GM12878 (cell line): ENCODE measurements at regions of chr7 and their contacts with region 1.

Region 1: DNA sequence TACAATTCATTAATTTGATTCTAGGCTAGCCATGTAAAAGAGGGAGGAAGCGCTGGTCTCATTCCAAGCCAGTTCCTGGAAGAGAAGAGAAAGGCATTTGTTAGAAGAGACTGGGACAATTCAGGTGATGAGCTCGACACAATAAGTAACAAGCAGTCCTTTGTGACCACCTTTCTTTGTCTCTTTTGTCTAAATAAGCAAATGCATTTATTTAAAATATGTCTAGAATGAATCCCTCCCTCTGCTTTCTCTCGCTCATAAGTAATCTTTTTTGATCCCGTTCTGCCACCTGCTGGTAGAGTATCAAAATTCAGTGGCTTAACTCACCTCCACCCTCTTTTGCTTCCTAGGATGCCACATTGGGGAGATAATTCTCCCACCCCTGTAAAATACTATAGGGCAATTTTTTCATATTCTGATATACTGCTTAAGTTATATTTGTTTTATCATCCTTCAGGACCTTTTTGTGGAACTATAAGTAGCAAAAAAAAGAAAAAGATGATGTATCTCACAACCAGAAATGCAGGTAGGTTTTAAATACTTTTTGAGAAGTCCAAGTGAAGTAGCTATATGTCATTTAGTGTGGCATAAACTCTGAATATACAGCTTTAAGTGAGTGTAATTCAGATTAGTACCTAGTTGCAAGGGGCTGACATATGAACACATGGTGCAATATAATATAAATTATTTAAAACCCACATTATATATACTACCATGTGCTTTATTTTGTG is 91.5 kb downstream of the GSDME start:
- DNase-seq: peak; percentile 27
- ATAC-seq: peak; percentile 92
- H3K4me3 ChIP-seq: no peak overlapping the region
- H3K27ac ChIP-seq: no peak overlapping the region
- H3K4me1 ChIP-seq: no peaks in the 10 kb centered on the region
- H3K27me3 ChIP-seq: no peaks in the 10 kb centered on the region
- CTCF ChIP-seq: peak; percentile 56 to 75 (median 56); a peak in 5 of 6 replicates
- EP300 ChIP-seq: no peak
- POLR2A ChIP-seq: no peak
- RAD21 ChIP-seq: peak; percentile 82

Region 2: DNA sequence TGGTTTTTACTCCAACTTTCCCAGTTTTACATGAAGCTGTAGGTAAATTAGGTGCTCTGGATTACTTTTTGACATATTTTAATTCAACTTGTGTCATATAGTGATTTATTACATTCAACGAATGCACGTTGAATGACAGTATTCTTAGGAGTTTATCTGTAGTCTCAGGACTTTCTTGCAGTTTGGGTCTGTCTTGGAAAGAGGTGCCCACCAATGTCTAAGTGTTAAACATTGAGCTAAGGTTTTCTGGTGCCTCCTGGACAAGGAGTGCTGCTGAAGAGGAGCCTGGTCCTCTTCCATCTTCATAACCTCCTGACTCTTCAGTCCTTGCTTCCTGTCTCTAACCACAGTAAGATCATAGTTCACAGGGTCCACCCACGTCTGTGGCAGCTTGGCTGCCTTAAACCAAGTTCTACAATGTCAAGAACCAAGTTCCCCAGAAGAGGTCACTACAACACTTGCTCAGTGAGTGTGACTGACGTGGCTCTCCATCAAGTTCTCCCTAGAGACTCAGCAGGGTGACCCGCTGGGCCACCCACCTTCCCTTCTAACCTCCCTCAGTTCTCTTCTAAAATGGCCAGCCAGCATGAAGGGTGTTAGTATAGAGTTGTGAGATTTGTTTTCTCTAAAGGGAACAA is 375.6 kb before region 1 on chr7:
- CTCF ChIA-PET with region 1: interaction called, 16 read pairs
- POLR2A ChIA-PET with region 1: no interaction called
- RAD21 ChIA-PET with region 1: interaction called, 11 read pairs
- SMC1A ChIA-PET with region 1: interaction called, 18 read pairs
- in situ Hi-C with region 1: loop called (anchors 5 kb)
- intact Hi-C with region 1: loop called (anchors 1 kb)
- DNase-seq: peak; percentile 70
- ATAC-seq: peak; percentile 99
- H3K4me3 ChIP-seq: no peak overlapping the region
- H3K27ac ChIP-seq: no peak overlapping the region
- H3K4me1 ChIP-seq: 0 out of 2 replicates have a peak, but pooled peaks cover 2% of the 10 kb centered on the region
- H3K27me3 ChIP-seq: peaks cover 7% of the 10 kb centered on the region in 2 experiments
- CTCF ChIP-seq: peak; percentile 63 to 76 (median 71)
- EP300 ChIP-seq: no peak
- POLR2A ChIP-seq: no peak
- RAD21 ChIP-seq: peak; percentile 90

Region 3: DNA sequence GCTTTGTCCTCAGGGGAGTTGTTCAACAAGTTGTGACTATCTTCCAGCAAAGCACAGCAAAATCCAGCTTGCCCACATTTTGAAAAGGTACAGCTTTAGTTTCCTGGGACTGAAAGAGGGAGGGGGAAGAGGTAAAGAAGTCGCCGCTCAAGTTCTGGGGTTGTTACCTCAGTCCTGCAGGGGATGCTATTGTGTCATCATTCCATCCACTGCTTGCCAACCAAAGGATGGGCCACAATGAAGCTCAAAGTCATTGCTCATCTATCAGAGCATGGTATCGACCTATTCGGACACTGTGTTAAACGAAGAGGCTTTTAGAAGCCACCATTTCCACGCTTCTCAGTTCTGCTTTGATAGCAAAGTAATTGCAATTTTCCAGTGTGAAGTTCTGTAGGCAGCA is 347.4 kb before region 1 on chr7:
- CTCF ChIA-PET with region 1: interaction called, 17 read pairs
- POLR2A ChIA-PET with region 1: no interaction called
- RAD21 ChIA-PET with region 1: interaction called, 6 read pairs
- SMC1A ChIA-PET with region 1: interaction called, 5 read pairs
- in situ Hi-C with region 1: no loop called
- intact Hi-C with region 1: loop called (anchors 2 kb)
- DNase-seq: no peak
- ATAC-seq: peak; percentile 86
- H3K4me3 ChIP-seq: no peak overlapping the region
- H3K27ac ChIP-seq: no peak overlapping the region
- H3K4me1 ChIP-seq: no peaks in the 10 kb centered on the region
- H3K27me3 ChIP-seq: no peaks in the 10 kb centered on the region
- CTCF ChIP-seq: peak; percentile 56 to 69 (median 66)
- EP300 ChIP-seq: no peak
- POLR2A ChIP-seq: no peak
- RAD21 ChIP-seq: peak; percentile 87

Region 4: DNA sequence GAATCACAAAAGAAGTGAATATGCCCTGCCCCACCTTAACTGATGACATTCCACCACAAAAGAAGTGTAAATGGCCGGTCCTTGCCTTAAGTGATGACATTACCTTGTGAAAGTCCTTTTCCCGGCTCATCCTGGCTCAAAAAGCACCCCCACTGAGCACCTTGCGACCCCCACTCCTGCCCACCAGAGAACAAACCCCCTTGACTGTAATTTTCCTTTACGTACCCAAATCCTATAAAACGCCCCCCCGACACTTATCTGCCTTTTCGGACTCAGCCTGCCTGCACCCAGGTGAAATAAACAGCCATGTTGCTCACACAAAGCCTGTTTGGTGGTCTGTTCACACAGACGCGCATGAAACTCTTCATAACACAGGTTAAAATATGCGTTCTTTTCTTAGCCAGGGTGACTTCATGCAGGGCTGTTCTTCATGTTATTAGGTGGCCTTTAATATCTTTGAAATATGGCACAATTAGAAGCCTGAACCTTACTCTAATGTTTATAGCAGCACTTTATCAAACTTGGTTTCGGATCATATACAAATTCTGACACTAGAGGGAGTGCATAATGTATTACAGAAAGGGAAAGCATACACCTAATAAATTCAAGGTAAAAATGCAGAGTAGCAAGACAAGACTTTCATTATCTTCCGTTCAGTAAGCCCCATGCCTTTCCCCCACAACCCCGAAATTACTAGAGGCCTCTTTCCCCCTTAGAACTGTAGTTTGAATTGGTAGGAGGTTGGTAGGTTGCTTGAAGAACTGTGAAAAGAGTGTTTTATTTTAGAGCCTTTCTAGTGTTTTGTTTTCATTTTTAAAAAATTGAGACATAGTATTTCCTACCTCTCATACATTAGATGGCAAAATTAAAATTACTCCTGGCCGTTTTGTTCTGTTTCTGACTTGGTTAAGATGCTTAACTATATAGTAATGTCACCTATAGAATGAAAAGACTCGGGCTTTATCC is 263.8 kb before region 1 on chr7:
- CTCF ChIA-PET with region 1: interaction called, 6 read pairs
- POLR2A ChIA-PET with region 1: no interaction called
- RAD21 ChIA-PET with region 1: no interaction called
- SMC1A ChIA-PET with region 1: interaction called, 3 read pairs
- in situ Hi-C with region 1: loop called (anchors 5 kb)
- intact Hi-C with region 1: loop called (anchors 1 kb)
- DNase-seq: no peak
- ATAC-seq: peak; percentile 81
- H3K4me3 ChIP-seq: no peak overlapping the region
- H3K27ac ChIP-seq: no peak overlapping the region
- H3K4me1 ChIP-seq: peaks cover 9% of the 10 kb centered on the region
- H3K27me3 ChIP-seq: no peaks in the 10 kb centered on the region
- CTCF ChIP-seq: peak; percentile 38 to 52 (median 50); a peak in 5 of 6 replicates
- EP300 ChIP-seq: no peak
- POLR2A ChIP-seq: no peak
- RAD21 ChIP-seq: peak; percentile 72

Region 5: GRCh38 chr7:24580283-24580946 is 85.3 kb before region 1 on chr7:
- CTCF ChIA-PET with region 1: interaction called, 136 read pairs
- POLR2A ChIA-PET with region 1: no interaction called
- RAD21 ChIA-PET with region 1: interaction called, 106 read pairs
- SMC1A ChIA-PET with region 1: interaction called, 142 read pairs
- in situ Hi-C with region 1: loop called (anchors 5 kb)
- intact Hi-C with region 1: loop called (anchors 1 kb)
- DNase-seq: no peak
- ATAC-seq: peak; percentile 5; the same call in 1 of the 3 replicates
- H3K4me3 ChIP-seq: no peak overlapping the region
- H3K27ac ChIP-seq: no peak overlapping the region
- H3K4me1 ChIP-seq: peaks cover 7% of the 10 kb centered on the region
- H3K27me3 ChIP-seq: no peaks in the 10 kb centered on the region
- CTCF ChIP-seq: no peak
- EP300 ChIP-seq: no peak
- POLR2A ChIP-seq: no peak
- RAD21 ChIP-seq: no peak

Region 6: DNA sequence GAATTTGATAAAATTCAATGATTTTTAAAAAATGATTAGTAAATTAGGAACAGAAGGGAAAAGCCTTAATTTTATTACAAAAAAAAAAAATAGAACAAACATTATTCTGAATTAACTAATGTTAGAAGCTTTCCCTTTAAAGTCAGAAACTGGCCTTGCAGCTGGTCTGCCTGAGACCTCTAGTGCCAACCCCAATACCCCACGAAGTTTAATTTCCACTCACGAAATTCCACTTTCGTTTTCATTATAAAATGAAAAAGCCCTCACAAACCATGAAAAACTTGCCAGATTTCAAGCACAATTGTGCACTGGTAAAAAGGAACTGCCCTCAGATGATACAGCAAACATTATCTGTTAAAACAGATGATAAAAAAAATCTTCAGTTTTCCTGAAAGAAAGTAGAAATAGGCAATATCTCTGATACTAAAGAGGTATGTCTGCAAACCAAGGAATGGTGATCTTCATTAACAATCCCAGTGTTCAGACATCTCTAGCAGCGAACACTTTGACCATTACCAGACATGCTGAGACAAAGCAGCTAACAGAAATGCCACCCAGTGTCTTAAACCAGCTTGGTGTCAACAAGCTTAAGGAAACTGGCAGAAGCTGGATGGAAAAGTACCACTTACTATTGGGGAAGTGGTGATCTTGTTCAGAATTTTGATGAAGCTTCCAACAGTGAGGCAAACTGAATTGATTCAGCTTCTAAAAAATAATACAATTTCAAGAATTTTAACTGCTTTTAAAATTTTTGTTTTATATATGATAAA is 12.2 kb before region 1 on chr7:
- CTCF ChIA-PET with region 1: interaction called, 10 read pairs
- POLR2A ChIA-PET with region 1: no interaction called
- RAD21 ChIA-PET with region 1: interaction called, 3 read pairs
- SMC1A ChIA-PET with region 1: interaction called, 17 read pairs
- in situ Hi-C with region 1: no loop called
- intact Hi-C with region 1: no loop called
- DNase-seq: no peak
- ATAC-seq: peak; percentile 60
- H3K4me3 ChIP-seq: no peak overlapping the region
- H3K27ac ChIP-seq: peak overlapping the region; percentile 65
- H3K4me1 ChIP-seq: no peaks in the 10 kb centered on the region
- H3K27me3 ChIP-seq: no peaks in the 10 kb centered on the region
- CTCF ChIP-seq: no peak
- EP300 ChIP-seq: no peak
- POLR2A ChIP-seq: no peak
- RAD21 ChIP-seq: no peak